CD8-positive, alpha-beta T cell (primary cell): ENCODE measurements at regions of chr10 and their contacts with region 1.

Region 1: DNA sequence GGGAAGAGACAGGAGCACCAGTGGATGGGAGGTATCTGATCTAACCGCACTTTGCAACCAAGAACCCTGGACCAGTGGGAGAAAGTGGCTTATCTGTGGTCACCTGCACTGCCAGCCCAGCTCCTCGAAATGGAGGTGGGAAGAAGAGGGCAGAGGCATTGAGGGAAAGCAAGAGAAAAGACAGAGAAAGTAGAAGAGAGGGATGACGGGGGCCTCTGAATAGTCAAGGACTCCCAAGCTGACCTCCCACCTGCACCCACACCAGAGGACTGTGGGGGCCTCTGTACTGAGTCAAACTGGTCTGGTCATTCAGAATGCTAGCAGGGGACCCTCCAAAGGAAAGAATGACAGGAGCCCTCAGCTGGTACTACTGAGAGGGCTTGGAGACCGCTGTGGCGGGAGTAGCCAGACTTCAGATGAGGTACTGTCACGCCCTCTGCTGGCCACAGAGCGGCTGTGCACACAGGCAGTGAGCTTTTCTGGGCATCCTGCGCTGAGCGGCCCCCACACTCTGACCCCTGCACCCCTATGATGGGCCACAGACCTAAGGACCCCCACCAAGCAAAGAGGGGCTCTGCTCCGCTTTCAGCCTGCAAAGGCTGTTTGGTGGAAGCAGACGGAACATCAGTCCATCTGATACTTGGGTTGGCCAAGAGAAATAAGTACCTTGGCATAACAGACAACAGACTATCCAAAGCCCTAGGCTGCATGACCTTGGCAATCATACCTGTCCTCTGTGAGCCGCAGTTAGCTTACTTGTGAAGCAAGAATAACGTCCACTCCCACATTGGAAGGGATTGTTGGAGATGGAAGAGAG is 112.9 kb downstream of the COL13A1 start:
- DNase-seq: peak in 8 of 9 experiments; percentile 27 to 64 (median 49)
- ATAC-seq: peak; percentile 68
- H3K4me3 ChIP-seq: no peak overlapping the region
- H3K4me3 Mint-ChIP-seq: no peak overlapping the region
- H3K27ac ChIP-seq: no peak overlapping the region
- H3K27ac Mint-ChIP-seq: no peak overlapping the region
- H3K4me1 ChIP-seq: no peaks in the 10 kb centered on the region
- H3K4me1 Mint-ChIP-seq: no peaks in the 10 kb centered on the region
- H3K27me3 ChIP-seq: peaks cover 0 to 2% of the 10 kb centered on the region in 2 experiments
- H3K27me3 Mint-ChIP-seq: peaks cover 2% of the 10 kb centered on the region
- CTCF ChIP-seq: peak; percentile 74

Region 2: GRCh38 chr10:69644658-69645295 is 269.8 kb before region 1 on chr10:
- CTCF ChIA-PET with region 1: interaction called, 3 read pairs
- POLR2A ChIA-PET with region 1: no interaction called
- intact Hi-C with region 1: loop called in 1 of 2 experiments (anchors 2 kb)
- DNase-seq: peak in 4 of 9 experiments; percentile 25 to 42 (median 32)
- ATAC-seq: no peak
- H3K4me3 ChIP-seq: no peak overlapping the region
- H3K4me3 Mint-ChIP-seq: no peak overlapping the region
- H3K27ac ChIP-seq: no peak overlapping the region
- H3K27ac Mint-ChIP-seq: no peak overlapping the region
- H3K4me1 ChIP-seq: no peaks in the 10 kb centered on the region
- H3K4me1 Mint-ChIP-seq: no peaks in the 10 kb centered on the region
- H3K27me3 ChIP-seq: peaks cover 0 to 2% of the 10 kb centered on the region in 2 experiments
- H3K27me3 Mint-ChIP-seq: peaks cover 11% of the 10 kb centered on the region
- CTCF ChIP-seq: peak; percentile 48

Region 3: DNA sequence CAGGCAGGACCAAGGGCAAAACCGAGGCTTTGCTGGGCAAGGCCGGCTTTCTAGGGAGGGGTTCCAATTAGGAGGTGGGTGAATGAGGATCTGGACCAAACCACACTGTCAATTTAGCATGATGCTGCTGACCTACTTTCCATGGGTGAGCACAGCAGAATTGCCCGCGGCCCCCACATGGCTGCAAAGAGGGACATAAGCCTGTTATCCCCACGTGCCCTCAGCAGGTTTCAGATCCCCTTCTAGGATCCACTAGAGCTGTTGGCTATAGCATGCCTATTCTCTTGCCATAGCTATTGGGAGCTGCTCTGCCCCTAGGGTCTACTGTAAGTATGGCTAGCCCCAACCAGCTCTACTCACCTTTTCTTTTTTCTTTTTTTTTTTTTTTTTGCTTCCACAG is 10.1 kb before region 1 on chr10:
- CTCF ChIA-PET with region 1: interaction called, 11 read pairs
- POLR2A ChIA-PET with region 1: no interaction called
- intact Hi-C with region 1: no loop called
- DNase-seq: no peak
- ATAC-seq: no peak
- H3K4me3 ChIP-seq: no peak overlapping the region
- H3K4me3 Mint-ChIP-seq: no peak overlapping the region
- H3K27ac ChIP-seq: no peak overlapping the region
- H3K27ac Mint-ChIP-seq: no peak overlapping the region
- H3K4me1 ChIP-seq: no peaks in the 10 kb centered on the region
- H3K4me1 Mint-ChIP-seq: no peaks in the 10 kb centered on the region
- H3K27me3 ChIP-seq: no peaks in the 10 kb centered on the region
- H3K27me3 Mint-ChIP-seq: peaks cover 6% of the 10 kb centered on the region
- CTCF ChIP-seq: no peak

Region 4: GRCh38 chr10:69938541-69938991 is 24.0 kb after region 1 on chr10:
- CTCF ChIA-PET with region 1: interaction called, 11 read pairs
- POLR2A ChIA-PET with region 1: no interaction called
- intact Hi-C with region 1: no loop called
- DNase-seq: no peak
- ATAC-seq: no peak
- H3K4me3 ChIP-seq: no peak overlapping the region
- H3K4me3 Mint-ChIP-seq: no peak overlapping the region
- H3K27ac ChIP-seq: no peak overlapping the region
- H3K27ac Mint-ChIP-seq: no peak overlapping the region
- H3K4me1 ChIP-seq: no peaks in the 10 kb centered on the region
- H3K4me1 Mint-ChIP-seq: no peaks in the 10 kb centered on the region
- H3K27me3 ChIP-seq: no peaks in the 10 kb centered on the region
- H3K27me3 Mint-ChIP-seq: peaks cover 4% of the 10 kb centered on the region
- CTCF ChIP-seq: no peak

Region 5: GRCh38 chr10:70348228-70348850 is 433.7 kb after region 1 on chr10:
- CTCF ChIA-PET with region 1: no interaction called
- POLR2A ChIA-PET with region 1: no interaction called
- intact Hi-C with region 1: no loop called
- DNase-seq: peak in 6 of 9 experiments; percentile 18 to 60 (median 32)
- ATAC-seq: peak; percentile 38
- H3K4me3 ChIP-seq: no peak overlapping the region
- H3K4me3 Mint-ChIP-seq: no peak overlapping the region
- H3K27ac ChIP-seq: no peak overlapping the region
- H3K27ac Mint-ChIP-seq: no peak overlapping the region
- H3K4me1 ChIP-seq: no peaks in the 10 kb centered on the region
- H3K4me1 Mint-ChIP-seq: no peaks in the 10 kb centered on the region
- H3K27me3 ChIP-seq: no peaks in the 10 kb centered on the region
- H3K27me3 Mint-ChIP-seq: no peaks in the 10 kb centered on the region
- CTCF ChIP-seq: peak; percentile 39